Dorsolateral prefrontal cortex (tissue), 120 donors: ENCODE measurements at regions of chr7 and their contacts with region 1.

Region 1: DNA sequence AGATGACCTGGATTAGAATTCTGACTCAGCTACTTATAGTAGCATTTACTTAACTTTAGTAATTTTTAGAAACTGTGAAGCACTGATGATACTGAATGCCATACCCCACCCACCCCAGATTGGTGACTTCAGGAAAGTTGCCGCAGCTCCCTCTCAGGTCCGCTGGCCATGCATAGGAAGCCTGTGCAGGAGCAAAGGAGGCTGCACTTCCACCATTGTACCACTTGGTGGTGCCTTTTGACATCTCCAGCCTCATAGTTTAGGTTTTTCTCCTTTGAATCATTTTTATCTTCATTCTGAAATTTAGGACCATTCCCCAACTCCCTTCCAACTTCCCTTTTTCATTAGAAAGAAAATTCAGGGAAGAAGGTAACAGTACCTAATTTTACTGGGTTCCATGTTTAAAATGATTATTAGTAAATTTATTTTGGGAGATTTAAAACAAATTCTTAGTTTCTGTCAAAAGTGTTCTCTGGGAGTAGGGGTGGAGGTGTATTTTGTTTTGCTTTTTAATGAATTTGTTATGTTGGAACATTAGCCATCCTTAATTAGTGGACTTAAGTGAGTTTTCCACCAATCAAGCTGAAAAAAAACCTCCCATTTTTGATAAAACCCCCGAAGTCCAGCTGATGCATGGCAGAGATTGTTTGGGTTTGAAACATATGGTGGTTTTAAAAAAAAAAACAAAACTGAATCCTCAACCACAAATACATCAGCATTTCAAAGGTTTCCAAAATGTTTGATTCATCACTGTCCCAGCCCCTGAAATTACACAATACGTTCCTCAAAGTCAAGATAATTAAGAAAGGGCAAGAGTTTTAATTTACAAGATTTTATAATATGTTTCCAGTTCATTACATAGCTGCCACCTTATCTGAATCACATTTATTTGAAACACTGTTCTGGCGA is 109.6 kb downstream of the WNT2 start:
- DNase-seq: peak in 6 of 10 donors; percentile 48 to 70 (median 55)
- H3K4me3 ChIP-seq: no peak overlapping the region
- H3K27ac ChIP-seq: no peak overlapping the region
- H3K27me3 ChIP-seq: no peaks in the 10 kb centered on the region
- CTCF ChIP-seq: peak; percentile 55 to 94 (median 83)

Region 2: GRCh38 chr7:117385340-117386109 is 172.3 kb after region 1 on chr7:
- intact Hi-C with region 1: loop called (anchors 5 kb)
- DNase-seq: no peak
- H3K4me3 ChIP-seq: peak overlapping the region in 1 of 59 donors; percentile 5
- H3K27ac ChIP-seq: no peak overlapping the region
- H3K27me3 ChIP-seq: no peaks in the 10 kb centered on the region
- CTCF ChIP-seq: peak; percentile 13 to 83 (median 61)

Region 3: DNA sequence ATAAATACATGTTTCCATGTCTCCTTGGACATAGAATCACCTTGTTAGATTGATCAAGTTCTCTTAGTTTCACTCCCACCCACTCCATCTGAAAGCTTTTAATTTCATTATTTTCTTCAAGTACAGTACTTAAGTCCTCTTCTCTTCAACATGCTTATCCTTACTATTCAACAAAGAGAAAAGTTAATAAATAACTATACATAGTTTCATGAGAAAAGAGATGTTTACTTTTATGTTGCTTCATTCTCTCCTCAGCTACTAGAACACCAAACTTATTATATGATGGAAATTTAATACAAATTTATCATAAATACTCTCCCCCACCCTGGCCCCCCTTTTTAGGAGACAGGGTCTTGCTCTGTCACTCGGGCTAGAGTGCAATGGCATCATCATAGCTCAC is 180.6 kb after region 1 on chr7:
- intact Hi-C with region 1: loop called (anchors 5 kb)
- DNase-seq: no peak
- H3K4me3 ChIP-seq: no peak overlapping the region
- H3K27ac ChIP-seq: no peak overlapping the region
- H3K27me3 ChIP-seq: peaks cover 0 to 8% (median 0%) of the 10 kb centered on the region in 45 donors
- CTCF ChIP-seq: no peak

Region 4: GRCh38 chr7:117427258-117427701 is 214.1 kb after region 1 on chr7 and contains the start of gene ASZ1:
- intact Hi-C with region 1: no loop called
- DNase-seq: no peak
- H3K4me3 ChIP-seq: no peak within 1 kb of the TSS
- H3K27ac ChIP-seq: no peak within 1 kb of the TSS
- H3K27me3 ChIP-seq: no peaks in the 10 kb centered on the region
- CTCF ChIP-seq: no peak
- total RNA-seq, gene ASZ1: not detected